Posterior vena cava (tissue), 2 donors: ENCODE measurements at regions of chr2 and their contacts with region 1.

Region 1: DNA sequence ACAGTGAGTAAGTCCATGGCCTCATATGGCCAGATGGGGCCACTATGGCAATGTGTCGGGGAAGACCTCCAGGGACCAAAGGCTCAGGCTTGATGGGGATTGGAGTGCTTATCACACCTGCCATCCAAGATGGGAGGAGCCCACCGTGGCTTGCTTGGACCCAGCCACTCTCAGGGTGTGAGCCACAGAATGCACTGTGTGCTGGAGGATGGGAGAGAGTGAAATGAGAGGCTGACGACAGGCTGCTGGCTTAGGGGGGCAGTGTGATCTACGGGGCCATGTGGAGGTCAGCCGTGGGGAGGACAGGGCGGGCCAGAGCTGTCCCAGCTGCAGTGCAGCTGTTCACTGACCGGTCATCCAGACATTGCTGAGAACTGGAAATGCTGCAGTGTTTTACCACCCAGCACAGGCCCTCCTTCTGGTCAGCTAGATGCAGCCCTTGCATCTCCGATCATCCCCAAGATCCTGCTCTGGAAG is 339.6 kb downstream of the CYP26B1 start:
- DNase-seq: no peak

Region 2: DNA sequence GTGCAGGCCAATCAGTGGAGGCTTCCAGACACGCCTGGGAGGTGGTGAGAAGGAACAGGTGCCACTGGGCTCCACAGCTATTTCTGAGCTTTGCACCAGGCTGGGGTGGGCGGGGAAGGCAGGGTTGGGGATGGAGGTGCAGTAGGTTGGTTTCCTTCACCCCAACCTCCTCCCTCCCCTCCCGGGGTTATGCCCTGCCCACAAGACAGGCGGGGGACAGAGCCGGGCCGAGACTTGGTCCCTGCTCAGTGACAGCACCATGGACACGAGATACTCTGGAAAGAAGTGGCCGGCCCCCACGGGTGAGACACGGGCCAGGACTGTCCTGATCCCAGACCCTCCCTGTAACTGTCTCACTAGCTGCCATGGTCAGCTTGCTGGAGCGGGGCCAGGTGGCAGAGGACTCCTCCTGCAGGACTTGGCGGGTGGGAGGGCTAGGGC is 295.0 kb before region 1 on chr2:
- intact Hi-C with region 1: no loop called
- DNase-seq: no peak

Region 3: DNA sequence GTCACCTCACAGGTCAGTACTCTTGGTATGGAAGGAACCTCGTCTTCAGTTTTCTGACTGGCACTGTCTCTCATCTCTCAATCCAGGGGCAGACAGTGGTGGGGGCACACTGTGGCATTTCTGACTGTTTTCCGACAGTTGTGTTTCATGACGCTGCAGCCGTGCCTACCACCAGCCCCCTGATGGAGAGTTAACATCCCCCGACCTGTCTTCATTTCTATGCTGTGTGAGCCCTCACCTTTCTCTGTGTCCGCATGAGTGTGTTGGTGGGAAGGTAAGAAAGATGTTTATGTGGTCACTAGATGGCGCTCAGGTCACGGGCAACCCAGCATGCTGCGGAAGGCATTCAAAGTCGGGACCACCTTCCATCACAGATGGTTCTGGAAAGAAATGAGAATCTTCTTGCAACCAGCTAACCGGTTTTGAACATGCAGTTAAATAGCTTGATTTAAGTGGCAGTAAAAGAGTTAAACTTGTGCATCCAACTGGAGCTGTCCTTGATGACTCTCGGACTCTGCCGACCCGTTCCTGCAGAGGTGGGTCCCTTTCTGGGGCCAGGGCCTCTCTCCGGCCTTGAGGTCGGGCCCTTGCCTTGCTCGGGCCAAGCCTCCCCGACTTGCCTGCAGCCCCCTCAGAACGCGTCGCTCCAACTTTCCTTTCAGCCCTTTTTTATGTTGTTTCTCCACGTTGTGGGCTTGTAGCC is 262.3 kb before region 1 on chr2:
- intact Hi-C with region 1: loop called in 1 of 2 experiments (anchors 5 kb)
- DNase-seq: peak; percentile 84

Region 4: GRCh38 chr2:71671895-71672825 is 135.9 kb before region 1 on chr2:
- intact Hi-C with region 1: no loop called
- DNase-seq: peak; percentile 54

Region 5: DNA sequence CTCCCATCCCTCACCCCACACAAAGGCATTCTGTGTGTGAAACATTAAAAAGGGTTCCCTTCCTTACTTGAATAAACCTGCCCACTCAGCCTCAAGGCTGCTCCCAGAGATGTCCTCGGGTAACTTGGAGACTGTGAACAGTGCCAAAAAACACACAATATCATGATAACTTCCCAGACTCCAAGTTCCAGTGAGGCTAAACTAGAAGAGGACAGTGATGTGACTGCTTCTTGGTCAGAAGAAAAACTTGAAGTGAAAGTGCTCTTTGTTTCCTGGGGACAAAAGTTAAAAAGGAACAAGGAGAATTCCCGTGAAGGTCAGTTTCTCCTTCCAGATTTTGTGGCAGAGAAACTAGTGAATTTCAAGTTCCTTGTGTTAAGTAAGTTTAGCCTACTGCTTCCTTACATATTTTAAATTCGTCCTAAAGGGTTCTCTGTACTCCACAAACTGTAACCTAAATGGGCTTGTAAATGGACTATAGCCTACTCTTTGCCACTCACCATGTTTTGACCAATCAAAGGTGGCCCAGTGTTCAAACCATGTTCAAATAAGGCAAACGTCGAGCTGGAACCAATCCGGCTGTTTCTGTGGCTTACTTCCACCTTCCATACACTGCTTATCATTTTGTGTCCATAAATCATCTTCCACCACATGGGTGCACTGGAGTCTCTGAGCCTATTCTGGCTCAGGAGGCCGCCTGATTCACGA is 1908.7 kb after region 1 on chr2:
- intact Hi-C with region 1: no loop called
- DNase-seq: no peak